A549 (cell line): ENCODE measurements at regions of chr5 and their contacts with region 1.

Region 1: GRCh38 chr5:59810041-59810440 is 83.5 kb downstream of the PDE4D start:
- DNase-seq: peak; percentile 70 to 82
- ATAC-seq: peak in 1 of 2 experiments; percentile 80; a peak in 3 of 6 replicates
- H3K4me3 ChIP-seq: peak overlapping the region; percentile 28; the same call in 1 of the 3 replicates
- H3K27ac ChIP-seq: no peak overlapping the region
- H3K4me1 ChIP-seq: peaks cover 11% of the 10 kb centered on the region; the same call in 2 of the 3 replicates
- CTCF ChIP-seq: peak; percentile 93
- EP300 ChIP-seq: no peak
- POLR2A ChIP-seq: no peak
- RAD21 ChIP-seq: peak; percentile 84 to 89

Region 2: GRCh38 chr5:59799668-59800346 is 10.2 kb before region 1 on chr5:
- CTCF ChIA-PET with region 1: interaction called, 31 read pairs
- POLR2A ChIA-PET with region 1: no interaction called
- DNase-seq: peak; percentile 29 to 68
- ATAC-seq: peak; percentile 80 to 84
- H3K4me3 ChIP-seq: peak overlapping the region; percentile 22; the same call in 2 of the 3 replicates
- H3K27ac ChIP-seq: peak overlapping the region; percentile 90 to 95
- H3K4me1 ChIP-seq: peaks cover 48% of the 10 kb centered on the region
- CTCF ChIP-seq: peak; percentile 91
- EP300 ChIP-seq: no peak
- POLR2A ChIP-seq: no peak
- RAD21 ChIP-seq: peak; percentile 94 to 96

Region 3: DNA sequence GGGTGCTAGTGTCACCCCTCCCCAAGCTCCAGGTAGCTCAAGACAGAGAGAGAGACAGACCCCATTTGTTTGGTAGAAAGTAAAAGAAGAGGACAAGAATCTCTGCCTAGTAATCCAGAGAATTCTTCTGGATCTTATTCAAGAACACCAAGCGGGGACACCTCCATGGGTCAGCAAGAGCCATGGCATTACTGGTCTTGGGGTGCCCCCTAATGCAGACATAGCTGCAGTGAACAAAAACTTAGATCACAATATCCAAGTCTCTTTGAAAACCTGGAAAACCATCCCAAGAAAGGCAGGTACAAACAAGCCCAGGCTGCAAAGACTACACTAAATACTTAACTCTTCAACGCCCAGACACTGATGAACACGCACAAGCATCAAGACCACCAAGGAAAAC is 113.4 kb after region 1 on chr5:
- CTCF ChIA-PET with region 1: interaction called, 11 read pairs
- POLR2A ChIA-PET with region 1: no interaction called
- DNase-seq: peak in 1 of 2 experiments; percentile 25
- ATAC-seq: peak in 1 of 2 experiments; percentile 47; a peak in 2 of 6 replicates
- H3K4me3 ChIP-seq: no peak overlapping the region
- H3K27ac ChIP-seq: no peak overlapping the region
- H3K4me1 ChIP-seq: no peaks in the 10 kb centered on the region
- CTCF ChIP-seq: no peak
- EP300 ChIP-seq: no peak
- POLR2A ChIP-seq: no peak
- RAD21 ChIP-seq: peak; percentile 30 to 58; a peak in 3 of 5 replicates

Region 4: DNA sequence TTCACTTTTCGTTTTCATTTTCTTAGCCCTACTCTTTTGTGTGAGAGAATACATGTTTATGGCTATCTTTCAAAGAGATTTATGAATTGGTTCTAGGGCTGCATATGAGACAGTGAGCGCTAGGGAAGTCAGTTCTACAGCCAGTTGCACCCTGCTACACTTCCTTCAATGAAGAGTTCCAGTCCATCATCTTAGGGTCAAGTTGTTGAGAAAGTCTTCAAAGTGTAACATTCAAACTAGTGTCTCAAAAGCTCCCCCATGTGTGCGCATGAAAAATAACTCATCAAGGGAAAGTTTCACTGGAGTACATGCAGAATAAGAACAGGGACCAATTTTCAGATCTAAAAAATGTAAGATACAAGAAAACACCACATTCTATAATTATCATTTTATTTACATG is 572.7 kb after region 1 on chr5:
- CTCF ChIA-PET with region 1: interaction called, 38 read pairs
- POLR2A ChIA-PET with region 1: no interaction called
- DNase-seq: peak; percentile 24 to 59
- ATAC-seq: peak in 1 of 2 experiments; percentile 64; a peak in 4 of 6 replicates
- H3K4me3 ChIP-seq: no peak overlapping the region
- H3K27ac ChIP-seq: no peak overlapping the region
- H3K4me1 ChIP-seq: peaks cover 11% of the 10 kb centered on the region; the same call in 1 of the 3 replicates
- CTCF ChIP-seq: peak; percentile 69
- EP300 ChIP-seq: no peak
- POLR2A ChIP-seq: no peak
- RAD21 ChIP-seq: peak; percentile 69 to 80

Region 5: DNA sequence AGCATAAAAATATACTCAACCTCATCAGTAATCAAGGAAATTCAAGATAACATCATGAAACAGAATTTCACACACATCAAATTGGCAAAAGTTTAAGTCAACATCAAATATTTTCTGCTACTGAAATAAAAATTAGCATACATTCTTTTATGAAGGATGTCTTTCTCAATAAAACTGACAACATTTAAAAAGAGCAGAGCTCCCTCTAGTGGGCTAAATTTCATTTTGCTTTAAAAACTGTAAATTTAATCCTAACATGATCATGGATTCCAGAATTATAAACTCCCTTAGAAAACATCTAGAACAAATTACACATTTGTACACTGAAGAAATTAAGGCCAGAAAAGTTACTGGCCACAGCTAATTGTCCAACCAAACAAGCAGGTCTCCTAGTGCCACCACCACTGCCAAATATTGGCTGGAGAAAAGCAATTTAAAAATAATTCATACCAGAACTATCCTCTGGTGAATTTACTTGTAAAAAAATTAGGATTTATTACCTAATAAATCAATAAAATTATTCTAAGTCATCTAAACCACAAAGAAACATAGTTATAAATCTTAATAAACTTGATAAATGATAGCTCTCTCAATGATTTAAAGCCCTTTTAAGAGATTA is 858.8 kb after region 1 on chr5:
- CTCF ChIA-PET with region 1: interaction called, 30 read pairs
- POLR2A ChIA-PET with region 1: no interaction called
- DNase-seq: peak; percentile 15 to 43
- ATAC-seq: no peak
- H3K4me3 ChIP-seq: no peak overlapping the region
- H3K27ac ChIP-seq: no peak overlapping the region
- H3K4me1 ChIP-seq: peaks cover 8% of the 10 kb centered on the region
- CTCF ChIP-seq: peak; percentile 83
- EP300 ChIP-seq: no peak
- POLR2A ChIP-seq: no peak
- RAD21 ChIP-seq: peak; percentile 59 to 73